Activated CD4-positive, alpha-beta T cell treated with anti-CD3 and anti-CD28 coated beads, Interleukin-2, amount 10 ng/mL, durations not matched to agents 24 days and 14 days (primary cell): ENCODE measurements at regions of chr17 and their contacts with region 1.

Region 1: DNA sequence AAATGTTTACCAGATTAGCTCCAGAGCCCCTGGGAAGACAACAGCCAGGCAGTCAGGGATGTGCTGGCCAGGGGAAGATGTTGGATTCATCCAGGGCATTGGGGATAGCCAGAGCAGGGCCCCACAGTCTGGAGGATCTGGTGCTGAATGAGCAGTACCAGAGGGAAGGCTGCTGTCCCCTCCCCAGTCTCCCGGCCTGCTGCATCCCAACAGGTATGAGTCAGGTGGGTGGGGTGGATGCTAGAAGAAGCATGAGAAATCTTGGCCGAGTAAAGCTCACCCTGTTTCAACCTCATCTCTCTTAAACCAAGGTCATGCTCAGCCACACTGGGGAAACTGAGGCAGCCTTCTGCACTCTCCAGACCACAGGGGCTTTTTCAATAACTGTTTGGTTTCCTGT is 71.9 kb upstream of the SEC14L1 start:
- DNase-seq: no peak
- H3K4me3 Mint-ChIP-seq: no peak overlapping the region
- H3K27ac Mint-ChIP-seq: no peak overlapping the region
- H3K4me1 Mint-ChIP-seq: no peaks in the 10 kb centered on the region
- H3K27me3 Mint-ChIP-seq: peaks cover 41% of the 10 kb centered on the region

Region 2: GRCh38 chr17:76816590-76817135 is 252.3 kb before region 1 on chr17:
- intact Hi-C with region 1: loop called (anchors 1 kb)
- DNase-seq: peak; percentile 89
- H3K4me3 Mint-ChIP-seq: no peak overlapping the region
- H3K27ac Mint-ChIP-seq: peak overlapping the region; percentile 16
- H3K4me1 Mint-ChIP-seq: peaks cover 7% of the 10 kb centered on the region
- H3K27me3 Mint-ChIP-seq: peaks cover 20% of the 10 kb centered on the region

Region 3: DNA sequence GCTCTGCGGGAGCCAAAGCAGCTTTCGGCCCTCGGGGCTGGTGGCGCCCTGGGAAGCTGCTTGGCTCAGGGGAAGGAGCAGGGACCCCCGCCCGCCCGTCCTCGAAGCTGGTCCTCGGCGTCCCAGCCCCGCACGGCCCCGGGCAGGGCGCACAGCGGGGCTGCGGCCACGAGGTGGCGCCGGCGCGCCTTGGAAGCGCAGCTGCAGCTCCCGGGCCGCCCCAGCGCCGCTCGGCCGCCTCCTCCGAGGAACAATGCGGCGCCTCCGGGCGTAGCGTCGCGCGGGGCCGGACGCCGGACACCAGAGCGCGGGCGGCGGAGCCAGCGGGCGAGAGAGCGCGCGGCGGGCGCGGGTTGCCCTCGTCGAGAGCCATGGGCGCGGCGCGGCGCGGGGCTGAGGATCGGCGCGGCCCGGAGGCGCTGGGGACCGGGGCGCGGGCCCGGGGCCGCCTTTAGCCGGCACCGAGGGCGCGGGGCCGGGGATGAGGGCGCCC is 200.7 kb before region 1 on chr17 and contains the start of gene MGAT5B:
- intact Hi-C with region 1: loop called (anchors 1 kb)
- DNase-seq: peak; percentile 95
- H3K4me3 Mint-ChIP-seq: peak within 1 kb of the TSS; percentile 74
- H3K27ac Mint-ChIP-seq: no peak within 1 kb of the TSS
- H3K4me1 Mint-ChIP-seq: peaks cover 12% of the 10 kb centered on the region
- H3K27me3 Mint-ChIP-seq: peaks cover 32% of the 10 kb centered on the region
- total RNA-seq, gene MGAT5B: 0.21 and 0.51 TPM in 2 replicates